ENCODE measurements at regions of chr2 and their contacts with region 1.

Region 1: DNA sequence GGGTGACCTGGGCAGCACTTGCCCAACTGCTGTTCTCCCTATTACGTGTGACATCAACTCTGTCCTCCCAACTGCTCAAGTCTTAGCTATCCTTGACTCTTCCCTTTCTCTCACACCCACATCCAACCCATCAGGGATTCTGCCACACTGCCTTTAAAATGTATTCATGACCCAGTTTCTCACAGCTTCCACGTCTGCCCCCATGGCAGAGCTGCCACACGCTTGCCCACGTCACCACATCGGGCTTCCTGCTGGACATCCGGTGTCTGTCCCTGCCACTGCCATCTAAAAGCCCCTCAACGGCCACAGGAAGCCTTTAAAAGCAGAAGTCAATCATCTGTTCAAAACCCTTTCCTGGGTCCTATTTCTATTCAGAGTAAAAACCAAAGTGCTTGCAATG is 233.1 kb upstream of the POU3F3 start:
- DNase-seq: no peak

Region 2: GRCh38 chr2:102703748-102704147 is 1917.1 kb before region 1 on chr2:
- intact Hi-C with region 1: loop called in 1 of 2 experiments (anchors 5 kb)
- DNase-seq: no peak